CD4-positive, alpha-beta T cell (primary cell): ENCODE measurements at regions of chr1 and their contacts with region 1.

Region 1: GRCh38 chr1:26811057-26811456 is 15.4 kb upstream of the ZDHHC18 start:
- DNase-seq: peak in 1 of 14 experiments; percentile 44
- ATAC-seq: no peak
- H3K4me3 ChIP-seq: no peak overlapping the region
- H3K4me3 Mint-ChIP-seq: no peak overlapping the region
- H3K27ac ChIP-seq: no peak overlapping the region
- H3K27ac Mint-ChIP-seq: no peak overlapping the region
- H3K4me1 ChIP-seq: peaks cover 7% of the 10 kb centered on the region
- H3K4me1 Mint-ChIP-seq: peaks cover 12% of the 10 kb centered on the region
- H3K27me3 ChIP-seq: no peaks in the 10 kb centered on the region
- H3K27me3 Mint-ChIP-seq: no peaks in the 10 kb centered on the region
- CTCF ChIP-seq: no peak

Region 2: DNA sequence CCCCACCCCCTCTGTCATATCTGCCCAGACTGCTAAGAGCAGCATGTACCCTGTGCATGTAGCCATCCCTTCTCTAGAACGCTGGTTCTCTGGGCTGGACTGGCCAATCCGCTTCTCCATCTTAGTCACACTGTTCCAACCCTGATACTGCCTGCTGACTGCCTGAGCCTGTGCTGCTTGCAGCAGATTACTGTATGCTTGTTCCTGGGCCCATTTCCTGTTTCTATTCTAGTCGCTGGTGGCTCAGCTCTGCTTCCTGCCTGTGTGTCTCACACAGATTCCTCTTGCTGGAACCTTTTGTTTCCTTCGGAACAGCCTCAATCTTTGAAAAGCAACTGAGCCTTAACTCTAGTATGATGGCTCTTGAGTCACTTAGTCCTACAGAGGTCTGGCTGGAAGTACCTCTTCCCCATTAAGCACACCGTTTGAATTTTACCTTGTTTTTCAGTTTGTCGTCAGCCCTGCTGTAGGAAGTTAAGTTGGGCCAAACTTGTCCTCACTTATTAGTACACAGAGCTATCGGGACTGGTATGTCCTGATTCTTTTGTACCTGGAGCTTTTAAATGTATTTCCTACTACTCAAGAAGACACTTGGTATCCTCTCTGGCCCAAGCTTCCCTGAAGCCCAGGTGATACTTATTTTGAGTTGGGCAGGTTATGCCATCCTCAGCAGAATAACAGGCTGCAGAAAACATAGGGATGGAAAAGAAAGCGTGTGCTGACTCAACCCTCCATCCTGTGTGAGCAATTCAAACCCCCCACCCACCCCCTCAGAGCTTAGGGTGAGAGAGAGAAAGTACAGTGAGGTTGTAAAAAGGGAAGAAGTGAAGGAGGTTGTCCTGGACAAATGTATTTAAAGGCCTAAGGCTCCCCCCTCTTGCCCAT is 66.7 kb before region 1 on chr1:
- CTCF ChIA-PET with region 1: no interaction called
- POLR2A ChIA-PET with region 1: no interaction called
- intact Hi-C with region 1: no loop called
- DNase-seq: peak; percentile 53 to 96 (median 70)
- ATAC-seq: peak; percentile 94
- H3K4me3 ChIP-seq: peak overlapping the region; percentile 27
- H3K4me3 Mint-ChIP-seq: peak overlapping the region; percentile 57
- H3K27ac ChIP-seq: peak overlapping the region; percentile 72 to 80
- H3K27ac Mint-ChIP-seq: peak overlapping the region; percentile 87
- H3K4me1 ChIP-seq: peaks cover 88% of the 10 kb centered on the region
- H3K4me1 Mint-ChIP-seq: peaks cover 89% of the 10 kb centered on the region
- H3K27me3 ChIP-seq: no peaks in the 10 kb centered on the region
- H3K27me3 Mint-ChIP-seq: no peaks in the 10 kb centered on the region
- CTCF ChIP-seq: no peak

Region 3: DNA sequence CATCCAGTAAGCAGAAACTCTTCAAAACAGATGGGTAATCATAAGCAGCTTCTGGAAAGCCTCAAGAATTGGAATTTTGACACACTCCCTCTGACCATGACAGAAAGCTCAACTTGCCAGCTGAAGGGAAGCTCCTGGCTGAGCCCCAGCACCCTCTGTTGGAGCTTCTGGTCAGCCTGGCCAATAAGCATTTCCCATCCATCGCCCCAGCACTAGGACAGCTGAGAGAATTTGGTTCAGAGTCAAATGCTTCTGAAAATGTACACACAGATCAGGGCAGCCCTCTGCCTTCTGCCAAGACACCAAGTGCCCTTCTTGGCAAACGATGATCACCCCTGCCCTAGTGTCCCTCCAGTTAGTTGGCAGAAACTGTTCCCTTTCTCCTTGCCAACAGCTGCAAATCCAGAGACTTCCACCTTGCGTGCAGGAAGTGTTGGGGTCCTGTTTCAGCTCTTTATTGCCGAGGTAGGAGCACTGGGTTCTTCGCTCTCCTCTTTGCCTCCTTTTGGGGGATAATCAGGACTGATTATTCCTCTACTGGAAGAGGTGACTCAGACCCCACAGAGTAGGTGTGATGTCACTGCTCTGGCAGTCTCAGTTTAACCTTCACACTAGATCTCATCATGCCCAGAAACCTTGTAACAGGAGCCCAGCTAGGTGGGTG is 11.4 kb before region 1 on chr1:
- CTCF ChIA-PET with region 1: interaction called, 12 read pairs
- POLR2A ChIA-PET with region 1: no interaction called
- intact Hi-C with region 1: no loop called
- DNase-seq: peak in 1 of 14 experiments; percentile 43
- ATAC-seq: peak; percentile 49
- H3K4me3 ChIP-seq: no peak overlapping the region
- H3K4me3 Mint-ChIP-seq: no peak overlapping the region
- H3K27ac ChIP-seq: peak overlapping the region; percentile 61 to 67
- H3K27ac Mint-ChIP-seq: peak overlapping the region; percentile 92
- H3K4me1 ChIP-seq: peaks cover 35% of the 10 kb centered on the region
- H3K4me1 Mint-ChIP-seq: peaks cover 30% of the 10 kb centered on the region
- H3K27me3 ChIP-seq: no peaks in the 10 kb centered on the region
- H3K27me3 Mint-ChIP-seq: no peaks in the 10 kb centered on the region
- CTCF ChIP-seq: no peak

Region 4: DNA sequence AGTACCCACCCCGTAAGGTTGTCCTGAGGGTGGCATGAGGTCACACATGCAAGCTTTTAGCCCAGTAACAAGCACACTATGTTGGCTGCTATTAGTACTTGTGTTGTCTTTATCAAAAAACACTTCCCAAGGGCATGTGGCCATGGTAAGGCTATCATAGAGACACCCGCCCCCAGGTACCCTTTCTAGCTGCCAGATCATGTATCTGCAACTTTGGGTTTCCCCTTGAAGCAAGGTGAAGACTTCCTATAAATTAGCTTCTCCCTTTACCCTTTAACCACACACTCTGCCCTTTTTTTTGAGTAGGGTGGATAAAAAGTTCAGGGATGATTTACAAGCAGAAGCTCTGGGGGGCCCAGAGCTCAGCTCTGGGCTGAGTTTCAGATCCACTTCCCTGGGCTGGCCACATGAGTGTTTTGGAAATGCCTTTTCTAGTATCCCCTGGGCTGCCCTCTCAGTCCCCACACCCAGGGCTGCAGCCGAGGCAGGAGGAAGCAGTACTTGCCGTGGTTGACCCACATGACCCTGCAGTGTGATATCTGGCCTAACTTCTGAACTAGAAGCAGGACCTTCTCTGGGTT is 17.4 kb after region 1 on chr1:
- CTCF ChIA-PET with region 1: interaction called, 36 read pairs
- POLR2A ChIA-PET with region 1: interaction called, 17 read pairs
- intact Hi-C with region 1: loop called (anchors 2 kb)
- DNase-seq: peak in 3 of 14 experiments; percentile 42 to 68 (median 67)
- ATAC-seq: no peak
- H3K4me3 ChIP-seq: peak overlapping the region; percentile 21
- H3K4me3 Mint-ChIP-seq: peak overlapping the region; percentile 94
- H3K27ac ChIP-seq: peak overlapping the region; percentile 11 to 49
- H3K27ac Mint-ChIP-seq: peak overlapping the region; percentile 100
- H3K4me1 ChIP-seq: peaks cover 83% of the 10 kb centered on the region
- H3K4me1 Mint-ChIP-seq: peaks cover 81% of the 10 kb centered on the region
- H3K27me3 ChIP-seq: no peaks in the 10 kb centered on the region
- H3K27me3 Mint-ChIP-seq: no peaks in the 10 kb centered on the region
- CTCF ChIP-seq: no peak

Region 5: DNA sequence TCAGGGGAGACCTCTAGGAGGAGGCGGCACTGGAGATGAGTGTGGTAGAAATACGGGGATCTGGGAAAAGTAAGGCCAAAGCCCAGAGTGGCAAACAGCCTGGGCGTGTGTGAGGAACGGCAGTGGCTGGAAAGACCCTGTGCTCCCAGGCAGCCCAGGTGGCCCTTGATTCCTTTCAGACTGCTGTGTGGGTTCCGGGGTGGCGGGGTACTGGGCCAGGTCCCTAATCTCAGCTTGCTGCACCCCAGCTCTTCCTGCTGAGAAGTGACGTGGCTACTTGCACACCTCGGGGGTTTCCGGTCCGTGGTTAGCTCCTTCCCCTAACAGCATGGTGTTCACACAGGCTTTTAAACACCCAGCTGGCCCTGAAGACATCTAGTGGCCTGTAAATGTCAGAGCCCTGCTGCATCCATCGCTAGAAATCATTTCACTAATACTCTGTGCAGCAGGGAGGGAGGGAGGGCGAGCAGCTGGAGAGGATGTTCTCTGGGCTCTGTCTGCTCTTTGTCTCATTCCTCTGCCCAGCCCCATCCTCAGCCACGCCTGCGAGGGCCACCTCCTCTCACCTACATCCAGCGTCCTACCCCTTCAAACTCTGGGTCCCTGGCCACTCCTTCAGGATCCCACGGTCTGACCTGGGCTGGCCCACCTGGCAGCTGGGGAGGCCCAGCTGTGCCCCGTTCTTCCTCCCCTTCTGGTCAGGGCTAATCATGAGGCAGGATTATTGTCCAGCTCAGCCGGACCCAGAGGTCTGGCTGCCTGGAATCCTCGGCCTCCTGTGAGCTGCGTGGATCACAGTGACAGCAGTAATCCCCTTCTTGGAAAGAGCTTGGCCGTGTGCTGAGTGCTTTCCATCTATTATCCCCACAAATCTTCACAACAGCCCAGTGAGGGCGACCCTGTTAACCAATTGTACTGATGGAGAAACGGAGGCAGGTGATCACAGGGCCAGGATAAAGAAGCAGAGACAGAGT is 22.7 kb after region 1 on chr1:
- CTCF ChIA-PET with region 1: interaction called, 36 read pairs
- POLR2A ChIA-PET with region 1: interaction called, 17 read pairs
- intact Hi-C with region 1: loop called (anchors 2 kb)
- DNase-seq: peak; percentile 76 to 99 (median 86)
- ATAC-seq: peak; percentile 94
- H3K4me3 ChIP-seq: peak overlapping the region; percentile 32
- H3K4me3 Mint-ChIP-seq: peak overlapping the region; percentile 86
- H3K27ac ChIP-seq: peak overlapping the region; percentile 96 to 97
- H3K27ac Mint-ChIP-seq: peak overlapping the region; percentile 100
- H3K4me1 ChIP-seq: peaks cover 75% of the 10 kb centered on the region
- H3K4me1 Mint-ChIP-seq: peaks cover 75% of the 10 kb centered on the region
- H3K27me3 ChIP-seq: no peaks in the 10 kb centered on the region
- H3K27me3 Mint-ChIP-seq: no peaks in the 10 kb centered on the region
- CTCF ChIP-seq: peak; percentile 33

Region 6: GRCh38 chr1:26844424-26845196 is 33.6 kb after region 1 on chr1:
- CTCF ChIA-PET with region 1: no interaction called
- POLR2A ChIA-PET with region 1: no interaction called
- intact Hi-C with region 1: no loop called
- DNase-seq: no peak
- ATAC-seq: no peak
- H3K4me3 ChIP-seq: no peak overlapping the region
- H3K4me3 Mint-ChIP-seq: no peak overlapping the region
- H3K27ac ChIP-seq: no peak overlapping the region
- H3K27ac Mint-ChIP-seq: peak overlapping the region; percentile 44
- H3K4me1 ChIP-seq: peaks cover 7% of the 10 kb centered on the region
- H3K4me1 Mint-ChIP-seq: peaks cover 4% of the 10 kb centered on the region
- H3K27me3 ChIP-seq: no peaks in the 10 kb centered on the region
- H3K27me3 Mint-ChIP-seq: no peaks in the 10 kb centered on the region
- CTCF ChIP-seq: no peak

Region 7: DNA sequence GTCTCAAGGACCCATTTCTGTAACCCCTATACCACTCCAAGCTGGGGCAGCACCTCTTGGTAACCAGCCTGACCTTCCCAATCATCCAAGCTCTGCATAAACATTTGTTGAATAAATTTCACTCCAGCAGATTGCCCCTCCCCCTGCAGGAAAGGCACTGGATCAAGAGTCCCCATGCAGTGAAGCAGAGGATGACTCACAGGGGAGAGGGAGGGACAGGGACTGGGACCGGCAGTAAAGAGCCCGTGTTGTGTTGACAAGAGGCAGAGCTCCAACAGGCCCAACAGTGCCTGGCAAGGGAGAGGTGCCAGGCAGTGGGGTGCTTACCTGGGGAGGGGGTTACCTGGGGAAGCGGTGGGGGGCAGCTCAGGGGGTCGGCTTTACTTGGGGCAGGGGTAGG is 311.6 kb after region 1 on chr1:
- CTCF ChIA-PET with region 1: no interaction called
- POLR2A ChIA-PET with region 1: no interaction called
- intact Hi-C with region 1: no loop called
- DNase-seq: peak in 2 of 14 experiments; percentile 34 to 48
- ATAC-seq: no peak
- H3K4me3 ChIP-seq: no peak overlapping the region
- H3K4me3 Mint-ChIP-seq: no peak overlapping the region
- H3K27ac ChIP-seq: no peak overlapping the region
- H3K27ac Mint-ChIP-seq: no peak overlapping the region
- H3K4me1 ChIP-seq: no peaks in the 10 kb centered on the region
- H3K4me1 Mint-ChIP-seq: no peaks in the 10 kb centered on the region
- H3K27me3 ChIP-seq: no peaks in the 10 kb centered on the region
- H3K27me3 Mint-ChIP-seq: no peaks in the 10 kb centered on the region
- CTCF ChIP-seq: no peak